PC-9 (cell line): ENCODE measurements at regions of chr12 and their contacts with region 1.

Region 1: DNA sequence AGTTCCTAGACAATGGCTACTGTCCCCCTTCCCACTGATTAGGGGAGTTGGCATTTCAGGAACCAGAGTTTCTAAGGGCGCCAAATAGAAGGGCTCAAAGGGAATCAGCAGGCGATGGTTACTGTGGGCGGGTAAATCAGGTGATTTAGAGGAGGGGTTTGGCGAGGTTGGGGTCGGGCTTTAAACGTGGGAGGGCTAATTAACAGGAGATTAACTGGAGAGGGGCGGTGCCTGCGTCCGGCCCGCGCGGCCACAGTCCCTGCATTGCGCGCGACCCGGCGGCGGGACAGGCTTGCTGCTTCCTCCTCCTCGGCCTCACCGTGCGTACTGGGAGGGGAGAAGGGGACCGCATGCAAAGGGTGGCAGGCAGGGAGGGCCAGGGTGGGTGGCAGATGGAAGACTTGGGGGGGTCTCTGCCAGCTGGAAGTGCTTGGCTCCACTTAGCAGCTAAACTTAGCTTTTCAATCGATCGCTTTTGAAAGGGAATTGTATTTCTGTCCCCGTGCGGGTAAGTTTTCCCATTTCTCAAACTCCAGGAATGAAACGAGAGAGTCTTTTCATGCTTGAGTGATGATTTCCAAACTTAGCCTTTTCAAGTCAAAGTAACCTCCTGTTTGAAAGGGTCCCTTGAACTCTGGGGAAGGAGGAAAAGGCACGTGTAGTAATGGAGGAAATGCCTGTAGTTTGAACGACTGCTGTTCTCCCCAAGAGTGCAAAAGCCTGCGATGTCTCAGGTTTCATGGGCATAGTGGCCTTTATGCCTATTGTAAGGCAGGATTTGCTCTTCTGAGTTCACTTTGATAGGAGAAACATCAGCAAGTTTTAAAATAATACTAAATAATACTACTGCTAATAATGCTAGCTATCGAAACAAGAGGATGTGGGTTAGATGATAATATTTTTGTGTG is at the start of gene MGST1:
- DNase-seq: peak; percentile 81 to 95
- H3K4me3 ChIP-seq: peak within 1 kb of the TSS; percentile 87
- H3K27ac ChIP-seq: peak within 1 kb of the TSS; percentile 96
- H3K4me1 ChIP-seq: peaks cover 35% of the 10 kb centered on the region
- H3K27me3 ChIP-seq: no peaks in the 10 kb centered on the region
- CTCF ChIP-seq: no peak
- total RNA-seq, gene MGST1: 750 and 766 TPM in 2 replicates

Region 2: GRCh38 chr12:15919418-15919817 is 428.2 kb before region 1 on chr12:
- CTCF ChIA-PET with region 1: interaction called, 12 read pairs
- POLR2A ChIA-PET with region 1: no interaction called
- intact Hi-C with region 1: loop called (anchors 10 kb)
- DNase-seq: no peak
- H3K4me3 ChIP-seq: no peak overlapping the region
- H3K27ac ChIP-seq: no peak overlapping the region
- H3K4me1 ChIP-seq: no peaks in the 10 kb centered on the region
- H3K27me3 ChIP-seq: no peaks in the 10 kb centered on the region
- CTCF ChIP-seq: no peak

Region 3: GRCh38 chr12:15979096-15980092 is 368.3 kb before region 1 on chr12:
- CTCF ChIA-PET with region 1: no interaction called
- POLR2A ChIA-PET with region 1: no interaction called
- intact Hi-C with region 1: loop called (anchors 2 kb)
- DNase-seq: peak; percentile 15 to 50
- H3K4me3 ChIP-seq: no peak overlapping the region
- H3K27ac ChIP-seq: peak overlapping the region; percentile 84
- H3K4me1 ChIP-seq: peaks cover 36% of the 10 kb centered on the region
- H3K27me3 ChIP-seq: no peaks in the 10 kb centered on the region
- CTCF ChIP-seq: peak; percentile 66

Region 4: DNA sequence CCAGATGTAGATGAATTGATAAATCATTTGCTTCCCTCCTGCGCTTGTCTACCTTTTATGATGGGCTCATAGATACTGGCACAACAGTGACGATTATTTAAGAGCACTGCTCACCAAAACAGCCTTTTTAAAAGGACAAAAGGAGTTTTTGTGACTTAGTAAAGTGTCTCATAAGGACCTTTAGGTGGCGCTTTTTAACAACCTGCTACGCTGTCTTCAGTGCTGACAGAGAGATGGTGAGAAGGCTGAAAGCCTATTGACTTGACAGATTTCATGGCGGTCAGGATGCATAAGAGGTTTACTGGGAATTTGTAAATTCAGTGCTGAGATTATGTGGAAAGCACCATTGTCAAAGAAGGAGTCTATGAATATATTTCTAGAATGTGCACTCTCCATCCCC is 157.8 kb before region 1 on chr12:
- CTCF ChIA-PET with region 1: no interaction called
- POLR2A ChIA-PET with region 1: no interaction called
- intact Hi-C with region 1: loop called (anchors 5 kb)
- DNase-seq: no peak
- H3K4me3 ChIP-seq: no peak overlapping the region
- H3K27ac ChIP-seq: no peak overlapping the region
- H3K4me1 ChIP-seq: no peaks in the 10 kb centered on the region
- H3K27me3 ChIP-seq: no peaks in the 10 kb centered on the region
- CTCF ChIP-seq: peak; percentile 56

Region 5: DNA sequence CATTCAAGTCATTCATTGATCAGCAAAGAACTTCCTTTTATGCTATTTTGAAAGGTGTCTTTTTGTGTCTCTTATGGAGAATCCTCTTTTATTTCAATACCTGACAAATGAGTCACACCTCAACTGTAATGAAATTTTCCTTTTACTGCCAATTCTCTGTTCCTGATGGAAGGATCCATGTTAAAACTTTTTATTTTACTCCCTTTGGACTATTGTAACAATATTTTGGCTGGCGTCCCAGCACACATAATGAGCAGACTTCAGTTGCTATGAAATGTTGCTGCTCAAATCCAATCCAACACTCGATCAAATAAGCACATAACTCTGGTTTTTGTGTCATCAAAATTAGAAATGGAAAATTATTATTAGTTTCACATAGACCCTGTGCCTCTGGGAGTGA is 48.2 kb before region 1 on chr12:
- CTCF ChIA-PET with region 1: no interaction called
- POLR2A ChIA-PET with region 1: no interaction called
- intact Hi-C with region 1: no loop called
- DNase-seq: no peak
- H3K4me3 ChIP-seq: no peak overlapping the region
- H3K27ac ChIP-seq: no peak overlapping the region
- H3K4me1 ChIP-seq: no peaks in the 10 kb centered on the region
- H3K27me3 ChIP-seq: no peaks in the 10 kb centered on the region
- CTCF ChIP-seq: no peak

Region 6: GRCh38 chr12:16332008-16332407 is 15.6 kb before region 1 on chr12:
- CTCF ChIA-PET with region 1: no interaction called
- POLR2A ChIA-PET with region 1: interaction called, 9 read pairs
- intact Hi-C with region 1: loop called (anchors 1 kb)
- DNase-seq: peak; percentile 37 to 87
- H3K4me3 ChIP-seq: no peak overlapping the region
- H3K27ac ChIP-seq: no peak overlapping the region
- H3K4me1 ChIP-seq: peaks cover 36% of the 10 kb centered on the region
- H3K27me3 ChIP-seq: no peaks in the 10 kb centered on the region
- CTCF ChIP-seq: no peak